ENCODE measurements at regions of chr2 and their contacts with region 1.

Region 1: DNA sequence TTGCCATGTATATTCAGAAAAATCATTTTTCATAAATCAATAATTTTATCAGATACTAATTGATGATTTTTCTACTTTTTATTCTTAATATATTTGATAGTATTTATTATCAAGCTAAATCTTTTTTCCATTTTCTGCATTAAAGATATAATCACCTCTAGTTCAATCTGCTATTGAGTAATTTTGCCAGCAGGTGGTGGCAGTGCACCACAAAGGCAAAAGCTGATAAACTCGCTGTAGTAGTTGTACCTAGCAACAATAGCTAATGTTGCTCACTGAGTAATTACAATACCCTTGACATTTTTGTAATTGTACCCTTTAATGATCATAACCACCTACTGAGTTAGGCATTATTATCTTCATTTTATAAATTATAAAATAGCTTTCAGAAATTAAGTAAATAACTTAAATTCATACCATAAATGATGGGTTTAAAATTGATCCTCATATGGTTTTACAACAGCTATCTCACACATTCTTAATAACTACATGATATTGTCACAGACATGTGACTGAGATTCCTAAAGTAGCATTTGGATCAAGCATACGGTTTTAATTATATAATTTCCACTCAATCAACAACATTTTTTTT is 52.0 kb upstream of the CALCRL start:
- DNase-seq: peak; percentile 76
- H3K4me3 Mint-ChIP-seq: no peak overlapping the region
- H3K27ac Mint-ChIP-seq: no peak overlapping the region
- H3K4me1 Mint-ChIP-seq: peaks cover 12% of the 10 kb centered on the region
- H3K27me3 Mint-ChIP-seq: no peaks in the 10 kb centered on the region
- CTCF ChIP-seq: peak; percentile 79

Region 2: DNA sequence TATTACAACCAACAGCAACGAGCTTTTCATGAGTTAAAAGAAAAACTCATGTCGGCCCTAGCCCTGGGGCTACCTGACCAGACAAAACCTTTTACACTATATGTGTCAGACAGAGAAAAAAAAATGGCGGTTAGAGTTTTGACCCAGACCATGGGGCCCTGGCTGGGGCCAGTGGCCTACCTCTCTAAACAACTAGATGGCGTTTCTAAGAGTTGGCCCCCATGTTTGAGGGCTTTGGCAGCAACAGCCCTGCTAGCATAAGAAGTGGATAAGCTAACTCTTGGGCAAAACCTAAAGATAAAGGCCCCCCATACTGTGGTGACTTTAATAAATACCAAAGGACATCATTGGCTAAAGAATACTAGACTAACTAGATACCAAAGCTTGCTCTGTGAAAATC is 14.9 kb after region 1 on chr2:
- CTCF ChIA-PET with region 1: interaction called, 22 read pairs
- POLR2A ChIA-PET with region 1: interaction called, 3 read pairs
- intact Hi-C with region 1: no loop called
- DNase-seq: no peak
- H3K4me3 Mint-ChIP-seq: no peak overlapping the region
- H3K27ac Mint-ChIP-seq: no peak overlapping the region
- H3K4me1 Mint-ChIP-seq: no peaks in the 10 kb centered on the region
- H3K27me3 Mint-ChIP-seq: no peaks in the 10 kb centered on the region
- CTCF ChIP-seq: no peak

Region 3: GRCh38 chr2:187547353-187547979 is 47.4 kb after region 1 on chr2:
- CTCF ChIA-PET with region 1: interaction called, 10 read pairs
- POLR2A ChIA-PET with region 1: interaction called, 4 read pairs
- intact Hi-C with region 1: no loop called
- DNase-seq: peak; percentile 88
- H3K4me3 Mint-ChIP-seq: peak overlapping the region; percentile 16
- H3K27ac Mint-ChIP-seq: peak overlapping the region; percentile 98
- H3K4me1 Mint-ChIP-seq: peaks cover 49% of the 10 kb centered on the region
- H3K27me3 Mint-ChIP-seq: no peaks in the 10 kb centered on the region
- CTCF ChIP-seq: no peak

Region 4: DNA sequence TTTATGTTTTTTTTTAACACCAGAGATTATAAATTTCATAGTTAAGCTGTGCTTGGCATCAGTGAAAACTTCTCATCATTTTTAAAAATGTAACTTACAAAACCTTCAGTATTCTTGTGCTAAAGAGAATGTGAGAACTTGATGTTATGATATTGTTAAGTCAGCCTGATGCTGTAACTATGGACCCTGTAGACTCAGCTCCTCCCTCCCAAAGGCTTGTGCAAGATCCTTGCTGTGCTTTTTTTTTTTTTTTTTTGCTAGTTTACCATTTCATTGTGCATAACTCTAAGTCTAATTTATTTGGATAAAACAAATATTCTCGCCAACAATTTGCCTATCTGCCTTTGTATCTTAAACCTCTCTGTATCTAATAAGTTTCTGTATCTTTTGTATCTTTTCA is 67.1 kb after region 1 on chr2:
- CTCF ChIA-PET with region 1: interaction called, 30 read pairs
- POLR2A ChIA-PET with region 1: no interaction called
- intact Hi-C with region 1: no loop called
- DNase-seq: no peak
- H3K4me3 Mint-ChIP-seq: no peak overlapping the region
- H3K27ac Mint-ChIP-seq: no peak overlapping the region
- H3K4me1 Mint-ChIP-seq: no peaks in the 10 kb centered on the region
- H3K27me3 Mint-ChIP-seq: no peaks in the 10 kb centered on the region
- CTCF ChIP-seq: no peak

Region 5: GRCh38 chr2:187842978-187843847 is 343.2 kb after region 1 on chr2:
- CTCF ChIA-PET with region 1: interaction called, 64 read pairs
- POLR2A ChIA-PET with region 1: no interaction called
- intact Hi-C with region 1: loop called (anchors 1 kb)
- DNase-seq: peak; percentile 74
- H3K4me3 Mint-ChIP-seq: no peak overlapping the region
- H3K27ac Mint-ChIP-seq: no peak overlapping the region
- H3K4me1 Mint-ChIP-seq: no peaks in the 10 kb centered on the region
- H3K27me3 Mint-ChIP-seq: no peaks in the 10 kb centered on the region
- CTCF ChIP-seq: peak; percentile 56

Region 6: GRCh38 chr2:188369365-188369764 is 869.3 kb after region 1 on chr2:
- CTCF ChIA-PET with region 1: interaction called, 4 read pairs
- POLR2A ChIA-PET with region 1: no interaction called
- intact Hi-C with region 1: loop called (anchors 10 kb)
- DNase-seq: peak; percentile 73
- H3K4me3 Mint-ChIP-seq: no peak overlapping the region
- H3K27ac Mint-ChIP-seq: no peak overlapping the region
- H3K4me1 Mint-ChIP-seq: no peaks in the 10 kb centered on the region
- H3K27me3 Mint-ChIP-seq: no peaks in the 10 kb centered on the region
- CTCF ChIP-seq: peak; percentile 59

Region 7: DNA sequence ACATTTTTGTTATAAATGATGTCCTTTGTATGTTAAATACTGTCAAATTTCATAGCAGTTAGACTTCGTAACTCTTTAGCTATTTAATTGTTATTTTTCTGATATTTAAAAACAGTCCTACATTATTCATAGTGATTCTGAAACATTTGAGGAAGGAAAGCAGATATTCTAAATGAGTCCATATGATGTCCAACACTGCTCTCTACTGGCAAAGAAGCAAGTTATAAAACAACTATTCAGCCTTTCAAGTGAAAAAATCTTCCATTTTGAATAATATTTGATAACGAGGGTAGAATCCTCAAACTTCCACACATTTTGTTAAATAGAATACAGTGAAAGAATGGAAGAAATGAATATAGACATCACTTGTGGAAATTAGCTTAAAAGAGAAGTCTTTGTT is 1012.4 kb after region 1 on chr2:
- CTCF ChIA-PET with region 1: interaction called, 6 read pairs
- POLR2A ChIA-PET with region 1: no interaction called
- intact Hi-C with region 1: loop called (anchors 1 kb)
- DNase-seq: peak; percentile 54
- H3K4me3 Mint-ChIP-seq: no peak overlapping the region
- H3K27ac Mint-ChIP-seq: no peak overlapping the region
- H3K4me1 Mint-ChIP-seq: no peaks in the 10 kb centered on the region
- H3K27me3 Mint-ChIP-seq: no peaks in the 10 kb centered on the region
- CTCF ChIP-seq: peak; percentile 62